ENCODE measurements at regions of chr17 and their contacts with region 1.

Region 1: GRCh38 chr17:31524926-31525800 is 133.7 kb downstream of the RAB11FIP4 start:
- DNase-seq: peak; percentile 93
- ATAC-seq: peak; percentile 93
- H3K4me3 ChIP-seq: no peak overlapping the region
- H3K27ac ChIP-seq: no peak overlapping the region
- H3K4me1 ChIP-seq: peaks cover 4% of the 10 kb centered on the region
- H3K27me3 ChIP-seq: no peaks in the 10 kb centered on the region
- CTCF ChIP-seq: peak; percentile 90

Region 2: GRCh38 chr17:31371511-31372097 is 153.6 kb before region 1 on chr17:
- intact Hi-C with region 1: no loop called
- DNase-seq: no peak
- ATAC-seq: no peak
- H3K4me3 ChIP-seq: no peak overlapping the region
- H3K27ac ChIP-seq: no peak overlapping the region
- H3K4me1 ChIP-seq: peaks cover 11% of the 10 kb centered on the region
- H3K27me3 ChIP-seq: no peaks in the 10 kb centered on the region
- CTCF ChIP-seq: no peak

Region 3: GRCh38 chr17:31433091-31433790 is 91.9 kb before region 1 on chr17:
- intact Hi-C with region 1: loop called (anchors 5 kb)
- DNase-seq: no peak
- ATAC-seq: no peak
- H3K4me3 ChIP-seq: no peak overlapping the region
- H3K27ac ChIP-seq: no peak overlapping the region
- H3K4me1 ChIP-seq: peaks cover 4% of the 10 kb centered on the region
- H3K27me3 ChIP-seq: peaks cover 5% of the 10 kb centered on the region
- CTCF ChIP-seq: no peak